ENCODE measurements at regions of chr20 and their contacts with region 1.

Region 1: GRCh38 chr20:14337400-14338171 is at the start of gene FLRT3:
- DNase-seq: peak; percentile 97
- H3K4me3 Mint-ChIP-seq: peak within 1 kb of the TSS; percentile 74
- H3K27ac Mint-ChIP-seq: peak within 1 kb of the TSS; percentile 84
- H3K4me1 Mint-ChIP-seq: no peaks in the 10 kb centered on the region
- H3K27me3 Mint-ChIP-seq: no peaks in the 10 kb centered on the region
- CTCF ChIP-seq: peak; percentile 89
- total RNA-seq, gene FLRT3: 13.3 and 15.7 TPM in 2 replicates

Region 2: GRCh38 chr20:14235355-14235754 is 102.2 kb before region 1 on chr20:
- CTCF ChIA-PET with region 1: no interaction called
- POLR2A ChIA-PET with region 1: interaction called, 12 read pairs
- intact Hi-C with region 1: no loop called
- DNase-seq: peak; percentile 60
- H3K4me3 Mint-ChIP-seq: peak overlapping the region; percentile 3
- H3K27ac Mint-ChIP-seq: peak overlapping the region; percentile 8
- H3K4me1 Mint-ChIP-seq: peaks cover 15% of the 10 kb centered on the region
- H3K27me3 Mint-ChIP-seq: no peaks in the 10 kb centered on the region
- CTCF ChIP-seq: no peak

Region 3: GRCh38 chr20:14622796-14623195 is 285.2 kb after region 1 on chr20:
- CTCF ChIA-PET with region 1: interaction called, 3 read pairs
- POLR2A ChIA-PET with region 1: interaction called, 5 read pairs
- intact Hi-C with region 1: loop called (anchors 2 kb)
- DNase-seq: peak; percentile 87
- H3K4me3 Mint-ChIP-seq: no peak overlapping the region
- H3K27ac Mint-ChIP-seq: peak overlapping the region; percentile 67
- H3K4me1 Mint-ChIP-seq: peaks cover 14% of the 10 kb centered on the region
- H3K27me3 Mint-ChIP-seq: no peaks in the 10 kb centered on the region
- CTCF ChIP-seq: peak; percentile 24

Region 4: GRCh38 chr20:14845199-14846160 is 507.9 kb after region 1 on chr20:
- CTCF ChIA-PET with region 1: interaction called, 16 read pairs
- POLR2A ChIA-PET with region 1: interaction called, 18 read pairs
- intact Hi-C with region 1: no loop called
- DNase-seq: peak; percentile 76
- H3K4me3 Mint-ChIP-seq: peak overlapping the region; percentile 1
- H3K27ac Mint-ChIP-seq: peak overlapping the region; percentile 82
- H3K4me1 Mint-ChIP-seq: peaks cover 13% of the 10 kb centered on the region
- H3K27me3 Mint-ChIP-seq: no peaks in the 10 kb centered on the region
- CTCF ChIP-seq: no peak

Region 5: DNA sequence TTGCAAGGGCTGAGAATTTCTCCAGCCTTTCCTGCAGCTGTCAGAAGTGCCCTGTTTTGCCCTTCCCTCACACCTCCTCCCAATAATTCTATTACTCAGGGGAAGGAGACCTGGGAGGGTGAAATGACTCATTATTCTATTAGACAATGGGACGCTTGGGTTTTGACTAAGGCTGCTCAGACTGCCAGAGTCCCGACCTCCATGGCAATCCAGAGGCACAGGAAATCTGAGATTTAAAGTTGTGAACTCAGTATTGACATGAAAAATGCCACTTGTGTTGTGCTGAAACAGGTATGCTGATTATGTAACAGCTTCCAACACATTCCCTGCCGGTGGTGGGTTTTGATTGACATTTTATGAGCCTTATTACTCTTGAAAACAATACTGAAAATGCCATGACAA is 625.7 kb after region 1 on chr20:
- CTCF ChIA-PET with region 1: interaction called, 4 read pairs
- POLR2A ChIA-PET with region 1: interaction called, 16 read pairs
- intact Hi-C with region 1: loop called (anchors 1 kb)
- DNase-seq: peak; percentile 87
- H3K4me3 Mint-ChIP-seq: no peak overlapping the region
- H3K27ac Mint-ChIP-seq: peak overlapping the region; percentile 57
- H3K4me1 Mint-ChIP-seq: peaks cover 35% of the 10 kb centered on the region
- H3K27me3 Mint-ChIP-seq: no peaks in the 10 kb centered on the region
- CTCF ChIP-seq: no peak

Region 6: DNA sequence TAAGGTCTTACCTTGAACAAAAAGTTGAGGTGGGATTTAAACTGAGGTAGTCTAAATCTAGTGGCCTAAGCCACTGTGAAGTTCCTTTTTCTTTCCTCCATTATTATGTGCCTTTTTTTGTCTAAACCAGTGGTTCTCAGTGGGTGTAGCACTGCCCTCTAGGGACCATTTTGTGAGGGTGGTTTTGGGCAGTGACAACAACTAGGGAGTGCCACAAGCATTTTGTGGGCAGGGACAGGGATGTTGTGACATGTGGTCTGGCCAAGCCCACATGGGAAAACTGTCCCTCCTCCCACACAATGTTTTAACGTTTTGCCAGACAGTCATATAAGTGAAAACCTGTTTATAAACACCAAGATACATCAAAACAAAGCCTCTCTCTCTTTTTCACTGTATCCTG is 899.2 kb after region 1 on chr20:
- CTCF ChIA-PET with region 1: interaction called, 14 read pairs
- POLR2A ChIA-PET with region 1: no interaction called
- intact Hi-C with region 1: loop called (anchors 1 kb)
- DNase-seq: peak; percentile 65
- H3K4me3 Mint-ChIP-seq: no peak overlapping the region
- H3K27ac Mint-ChIP-seq: no peak overlapping the region
- H3K4me1 Mint-ChIP-seq: no peaks in the 10 kb centered on the region
- H3K27me3 Mint-ChIP-seq: no peaks in the 10 kb centered on the region
- CTCF ChIP-seq: peak; percentile 63

Region 7: GRCh38 chr20:15759594-15759993 is 1422.0 kb after region 1 on chr20:
- CTCF ChIA-PET with region 1: no interaction called
- POLR2A ChIA-PET with region 1: interaction called, 4 read pairs
- intact Hi-C with region 1: loop called (anchors 1 kb)
- DNase-seq: peak; percentile 5
- H3K4me3 Mint-ChIP-seq: no peak overlapping the region
- H3K27ac Mint-ChIP-seq: no peak overlapping the region
- H3K4me1 Mint-ChIP-seq: peaks cover 5% of the 10 kb centered on the region
- H3K27me3 Mint-ChIP-seq: no peaks in the 10 kb centered on the region
- CTCF ChIP-seq: no peak

Measured in MCF 10A (cell line).